Heart right ventricle (tissue), 16 donors: ENCODE measurements at regions of chr1 and their contacts with region 1.

Region 1: DNA sequence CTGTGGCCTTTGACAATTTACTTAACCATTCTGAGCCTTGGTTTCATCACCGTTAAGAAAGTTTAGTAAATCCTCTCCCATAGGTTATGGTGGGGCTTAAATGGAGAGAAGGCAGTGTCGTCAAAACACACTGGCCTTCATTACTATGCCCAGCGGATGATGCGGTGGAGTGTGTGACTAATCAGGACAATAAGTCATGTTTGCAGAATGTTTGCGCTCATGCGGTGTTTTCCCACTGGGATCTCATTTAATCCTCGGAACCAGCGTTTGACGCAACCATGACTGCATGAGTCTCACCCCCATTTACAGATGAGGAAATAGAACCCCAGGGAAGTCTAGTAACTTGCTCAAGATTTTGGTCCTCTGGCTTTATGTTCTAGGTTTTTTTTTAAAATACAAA is 17.5 kb downstream of the SLC26A9 start:
- DNase-seq: no peak
- ATAC-seq: no peak
- H3K4me3 ChIP-seq: no peak overlapping the region
- H3K27ac ChIP-seq: no peak overlapping the region
- H3K4me1 ChIP-seq: peaks cover 0 to 9% (median 3%) of the 10 kb centered on the region in 9 donors
- H3K27me3 ChIP-seq: no peaks in the 10 kb centered on the region
- CTCF ChIP-seq: no peak

Region 2: DNA sequence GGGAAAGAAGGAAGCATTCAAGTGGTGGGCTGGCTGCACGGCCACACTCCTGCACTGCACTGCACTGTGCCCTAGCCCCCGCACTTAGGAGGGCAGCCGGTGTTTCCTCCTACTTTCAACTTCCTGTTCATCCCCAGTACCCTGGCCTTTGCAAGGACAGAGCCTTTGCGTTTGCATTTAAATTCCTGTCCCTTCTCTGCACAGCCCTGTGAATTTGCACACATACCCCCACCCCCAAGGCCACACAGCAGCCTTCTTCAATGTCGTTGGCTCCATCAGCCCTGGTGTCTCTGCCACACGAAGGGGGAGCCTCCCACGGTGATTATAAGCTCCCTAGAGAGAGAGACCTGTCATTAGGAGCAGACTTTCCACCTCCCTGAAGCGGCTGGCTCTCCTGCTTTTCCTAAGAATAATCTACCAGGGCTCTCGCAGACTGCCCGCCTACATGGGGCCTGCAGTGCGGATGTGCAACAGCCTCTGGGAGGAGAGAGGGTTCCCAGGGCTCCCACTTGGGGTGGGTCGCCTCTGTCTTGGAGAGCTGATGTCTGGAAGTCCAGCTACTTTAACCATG is 232.2 kb before region 1 on chr1:
- intact Hi-C with region 1: no loop called
- DNase-seq: no peak
- ATAC-seq: peak in 2 of 8 donors; percentile 19 to 22
- H3K4me3 ChIP-seq: no peak overlapping the region
- H3K27ac ChIP-seq: no peak overlapping the region
- H3K4me1 ChIP-seq: no peaks in the 10 kb centered on the region
- H3K27me3 ChIP-seq: peaks cover 0 to 5% (median 0%) of the 10 kb centered on the region in 7 donors
- CTCF ChIP-seq: no peak

Region 3: GRCh38 chr1:205961405-205961804 is 35.7 kb after region 1 on chr1:
- intact Hi-C with region 1: loop called in 1 of 10 experiments (anchors 5 kb)
- DNase-seq: peak in 1 of 2 donors; percentile 33
- ATAC-seq: peak in 7 of 8 donors; percentile 30 to 82 (median 65)
- H3K4me3 ChIP-seq: no peak overlapping the region
- H3K27ac ChIP-seq: peak overlapping the region in 2 of 10 donors; percentile 41 to 70
- H3K4me1 ChIP-seq: peaks cover 6 to 27% (median 21%) of the 10 kb centered on the region in 9 donors
- H3K27me3 ChIP-seq: peaks cover 0 to 3% (median 0%) of the 10 kb centered on the region in 7 donors
- CTCF ChIP-seq: no peak